ENCODE measurements at regions of chr22 and their contacts with region 1.

Region 1: GRCh38 chr22:28373831-28374230 is 305.8 kb downstream of the TTC28 start:
- DNase-seq: no peak
- H3K4me3 Mint-ChIP-seq: no peak overlapping the region
- H3K27ac Mint-ChIP-seq: peak overlapping the region; percentile 30
- H3K4me1 Mint-ChIP-seq: peaks cover 74% of the 10 kb centered on the region
- H3K27me3 Mint-ChIP-seq: no peaks in the 10 kb centered on the region

Region 2: DNA sequence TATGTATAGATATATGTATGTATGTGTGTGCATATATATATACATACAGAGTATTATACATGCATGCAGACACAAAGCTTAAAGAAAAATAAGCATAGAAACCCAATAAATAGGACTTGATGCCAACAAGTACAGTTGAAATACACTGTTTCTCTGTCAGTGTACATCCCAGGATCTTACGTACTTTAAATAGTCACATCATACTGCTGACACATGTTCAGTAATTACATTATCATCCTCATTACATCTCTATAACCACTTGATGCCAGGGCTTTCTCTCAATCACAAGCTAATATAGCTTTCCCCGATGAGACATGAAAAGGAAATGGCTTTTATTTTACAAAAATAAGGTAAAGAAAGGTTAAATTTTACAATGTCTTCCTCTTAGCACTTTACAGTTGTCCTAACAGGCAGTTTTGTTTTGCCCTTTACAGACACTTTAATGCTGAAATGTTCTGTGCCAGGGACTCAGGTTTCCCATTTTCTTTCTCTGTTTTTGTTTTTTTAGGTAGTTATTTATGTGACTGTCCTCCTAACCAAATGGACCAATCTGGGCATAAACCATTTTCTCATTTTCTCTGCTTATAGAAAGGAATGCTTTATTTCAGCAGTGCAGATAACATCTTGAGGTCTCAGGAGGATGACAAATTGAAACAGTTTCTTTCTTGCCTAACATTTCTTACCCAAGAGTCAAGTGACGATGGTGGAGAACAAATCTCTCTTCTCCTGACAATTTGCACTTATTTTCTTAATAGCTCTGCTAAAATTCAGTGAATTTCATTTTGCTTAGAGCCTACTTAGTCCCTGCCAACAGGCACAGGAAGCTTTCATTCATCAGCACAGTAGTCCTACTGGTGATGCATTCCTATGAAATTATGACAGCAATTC is 44.4 kb before region 1 on chr22:
- intact Hi-C with region 1: loop called (anchors 5 kb)
- DNase-seq: no peak
- H3K4me3 Mint-ChIP-seq: no peak overlapping the region
- H3K27ac Mint-ChIP-seq: no peak overlapping the region
- H3K4me1 Mint-ChIP-seq: peaks cover 17% of the 10 kb centered on the region
- H3K27me3 Mint-ChIP-seq: no peaks in the 10 kb centered on the region

Measured in activated T-helper 1 cell treated with anti-CD3 and anti-CD28 coated beads, Interleukin-12 subunit alpha, Interleukin-12 subunit beta, Interleukin-2, Interleukin-4 antibody, amounts not matched to agents 30 ng/mL and 10 ng/mL and 1 ng/mL, durations not matched to agents 14 hours and 24 hours and 36 hours (primary cell).